ENCODE measurements at regions of chr5 and their contacts with region 1.

Region 1: DNA sequence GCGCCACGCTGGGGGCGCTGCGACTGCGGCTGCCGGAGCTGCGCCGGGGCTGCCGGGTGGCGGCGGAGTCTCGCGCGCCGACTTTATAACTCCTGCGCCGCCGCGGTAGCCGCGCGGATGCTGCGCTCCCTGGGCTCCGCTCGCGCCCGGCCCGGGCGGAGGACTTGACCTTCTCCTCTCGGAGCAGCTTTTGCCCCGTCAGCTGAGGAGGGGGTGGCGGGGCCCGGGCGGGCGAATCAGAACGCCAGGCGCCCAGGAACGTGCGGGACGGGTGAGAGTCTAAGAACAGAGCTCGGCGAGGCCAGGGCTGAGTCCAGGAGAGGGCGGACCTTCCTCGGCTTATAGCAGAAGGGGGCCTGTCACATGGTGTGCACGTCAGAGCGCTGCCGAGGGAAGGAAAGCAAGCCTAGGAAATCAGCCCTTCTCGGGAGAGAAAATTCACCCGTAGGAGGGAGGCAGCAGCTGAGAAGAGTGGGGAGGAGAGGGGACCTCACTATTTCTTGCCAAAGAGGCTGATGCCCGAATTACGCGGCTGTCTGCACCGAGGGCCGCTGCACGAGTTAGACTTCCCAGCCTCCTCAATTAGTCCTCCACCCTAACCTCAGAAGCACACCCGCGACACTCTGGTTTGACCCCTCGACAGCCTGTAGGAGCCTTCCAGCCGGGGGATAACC is at the start of gene FOXD1:
- DNase-seq: peak; percentile 91
- H3K4me3 ChIP-seq: peak within 1 kb of the TSS; percentile 82
- CTCF ChIP-seq: peak; percentile 26

Region 2: DNA sequence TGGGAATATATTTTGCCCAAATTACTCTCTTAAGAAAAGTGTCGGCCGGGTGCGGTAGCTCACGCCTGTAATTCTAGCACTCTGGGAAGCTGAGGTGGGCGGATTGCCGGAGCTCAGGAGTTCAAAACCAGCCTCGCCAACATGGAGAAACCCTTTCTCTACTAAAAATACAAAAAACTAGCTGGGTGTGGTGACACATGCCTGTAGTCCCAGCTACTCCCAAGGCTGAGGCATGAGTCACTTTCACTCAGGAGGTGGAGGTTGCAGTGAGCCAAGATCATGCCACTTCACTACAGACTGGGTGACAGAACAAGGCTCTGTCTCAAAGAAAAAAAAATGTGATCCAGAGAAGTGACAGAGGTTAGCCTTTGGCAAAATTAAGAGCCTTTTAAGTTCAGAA is 354.7 kb before region 1 on chr5:
- CTCF ChIA-PET with region 1: interaction called, 11 read pairs
- POLR2A ChIA-PET with region 1: interaction called, 3 read pairs
- DNase-seq: no peak
- H3K4me3 ChIP-seq: no peak overlapping the region
- CTCF ChIP-seq: no peak

Region 3: GRCh38 chr5:73298772-73299630 is 149.6 kb before region 1 on chr5:
- CTCF ChIA-PET with region 1: interaction called, 14 read pairs
- POLR2A ChIA-PET with region 1: interaction called, 5 read pairs
- DNase-seq: no peak
- H3K4me3 ChIP-seq: peak overlapping the region; percentile 45
- CTCF ChIP-seq: no peak

Region 4: DNA sequence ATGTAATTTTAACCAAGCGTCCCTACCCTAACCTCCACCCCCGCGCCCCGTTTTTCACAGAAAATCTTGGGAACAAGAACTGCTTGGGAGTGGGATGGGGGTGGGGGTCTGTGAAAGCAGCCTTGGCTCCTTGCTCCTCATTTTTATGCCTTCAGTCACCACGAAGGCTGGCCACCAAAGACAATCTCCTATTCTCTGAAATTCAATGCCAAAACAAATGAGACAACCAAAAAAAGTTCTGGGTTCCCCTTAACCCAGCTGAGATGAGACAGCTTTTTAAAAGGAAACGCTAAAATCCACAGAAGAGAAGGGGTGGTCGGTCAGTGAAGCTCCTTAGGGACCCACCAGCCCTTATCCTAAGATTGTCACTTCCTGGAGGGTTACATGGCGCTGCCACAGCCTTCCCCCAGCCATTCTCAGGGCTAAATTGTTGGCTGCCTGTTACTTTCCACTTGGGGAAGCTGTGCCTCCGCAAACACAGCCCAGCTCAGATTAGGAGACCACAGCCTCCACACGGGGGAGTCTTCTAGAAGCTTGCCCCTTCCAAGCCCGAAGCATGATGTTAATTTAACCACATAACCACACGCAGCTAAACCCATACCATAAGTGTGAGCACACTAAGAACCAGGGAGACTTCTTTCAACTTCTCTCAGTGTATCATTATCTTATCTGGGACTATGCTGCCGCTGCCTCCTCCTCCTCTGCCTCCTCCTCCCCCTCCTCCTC is 136.3 kb before region 1 on chr5:
- CTCF ChIA-PET with region 1: interaction called, 72 read pairs
- POLR2A ChIA-PET with region 1: interaction called, 59 read pairs
- DNase-seq: peak; percentile 97
- H3K4me3 ChIP-seq: no peak overlapping the region
- CTCF ChIP-seq: peak; percentile 77

Region 5: DNA sequence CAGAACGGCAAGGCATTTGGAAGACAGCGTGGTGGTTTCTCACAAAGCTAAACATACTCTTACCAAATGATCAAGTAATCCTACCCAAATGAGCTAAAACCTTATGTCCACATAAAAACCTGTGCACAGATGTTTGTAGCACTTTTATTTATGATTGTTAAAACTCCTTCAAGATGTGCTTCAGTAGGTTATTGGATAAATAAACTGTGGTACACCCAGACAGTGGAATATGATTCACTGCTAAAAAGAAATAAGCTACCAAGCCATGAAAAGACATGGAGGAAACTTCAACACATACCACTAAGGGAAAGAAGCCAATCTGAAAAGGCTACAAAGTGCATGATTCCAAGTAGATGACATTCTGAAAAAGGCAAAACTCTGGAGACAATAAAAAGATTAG is 94.2 kb before region 1 on chr5:
- CTCF ChIA-PET with region 1: interaction called, 3 read pairs
- POLR2A ChIA-PET with region 1: interaction called, 10 read pairs
- DNase-seq: no peak
- H3K4me3 ChIP-seq: no peak overlapping the region
- CTCF ChIP-seq: no peak

Region 6: GRCh38 chr5:73374520-73375190 is 73.9 kb before region 1 on chr5:
- CTCF ChIA-PET with region 1: interaction called, 11 read pairs
- POLR2A ChIA-PET with region 1: interaction called, 8 read pairs
- DNase-seq: no peak
- H3K4me3 ChIP-seq: no peak overlapping the region
- CTCF ChIP-seq: no peak

Region 7: GRCh38 chr5:73464016-73464745 is 15.6 kb after region 1 on chr5:
- CTCF ChIA-PET with region 1: interaction called, 22 read pairs
- POLR2A ChIA-PET with region 1: interaction called, 3 read pairs
- DNase-seq: no peak
- H3K4me3 ChIP-seq: no peak overlapping the region
- CTCF ChIP-seq: no peak

Measured in AG04449 (cell line).